Activated B cell treated with CpG ODN at 0.5 μM for 24 hours (primary cell): ENCODE measurements at regions of chr10 and their contacts with region 1.

Region 1: DNA sequence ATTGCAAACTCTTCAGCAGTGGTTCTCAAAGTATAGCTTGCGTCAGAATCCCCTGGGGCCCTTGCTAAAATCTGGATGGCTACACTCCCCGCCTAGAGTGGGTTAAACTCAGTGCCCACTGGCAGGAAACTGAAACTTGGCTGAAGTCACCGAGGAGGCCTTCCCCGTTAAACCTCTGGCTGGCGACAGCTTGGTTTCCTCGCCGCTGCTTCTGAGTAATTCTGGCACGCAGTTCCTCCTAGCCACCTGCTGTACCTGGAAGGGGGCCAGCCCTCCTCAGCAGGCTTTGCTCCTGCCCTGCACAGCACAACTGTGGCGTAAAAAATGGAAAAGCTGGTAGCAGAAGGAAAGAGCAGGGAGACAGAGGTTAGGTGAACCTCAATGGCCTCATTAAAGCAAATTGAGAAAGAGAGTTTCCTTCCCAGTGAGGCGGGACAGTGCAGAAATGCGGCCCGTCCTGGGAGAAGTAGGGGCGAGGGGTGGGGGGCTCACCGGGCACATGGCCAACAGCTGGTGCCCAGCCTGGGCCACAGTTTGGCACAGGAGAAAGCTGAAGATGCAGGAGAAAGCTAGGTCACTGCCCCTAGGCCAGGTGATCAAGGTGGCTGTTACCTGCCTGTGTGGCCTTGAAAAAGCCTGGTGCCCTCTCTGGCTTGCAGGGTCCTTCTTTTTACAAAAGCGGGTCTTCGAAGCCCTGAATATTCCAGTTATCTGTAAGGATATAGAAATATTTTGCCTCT is 46.6 kb downstream of the ALOX5 start:
- DNase-seq: peak; percentile 50
- ATAC-seq: peak; percentile 56
- H3K4me3 Mint-ChIP-seq: peak overlapping the region; percentile 95
- H3K27ac Mint-ChIP-seq: peak overlapping the region; percentile 97
- H3K4me1 Mint-ChIP-seq: peaks cover 65% of the 10 kb centered on the region
- H3K27me3 Mint-ChIP-seq: no peaks in the 10 kb centered on the region
- CTCF ChIP-seq: no peak

Region 2: DNA sequence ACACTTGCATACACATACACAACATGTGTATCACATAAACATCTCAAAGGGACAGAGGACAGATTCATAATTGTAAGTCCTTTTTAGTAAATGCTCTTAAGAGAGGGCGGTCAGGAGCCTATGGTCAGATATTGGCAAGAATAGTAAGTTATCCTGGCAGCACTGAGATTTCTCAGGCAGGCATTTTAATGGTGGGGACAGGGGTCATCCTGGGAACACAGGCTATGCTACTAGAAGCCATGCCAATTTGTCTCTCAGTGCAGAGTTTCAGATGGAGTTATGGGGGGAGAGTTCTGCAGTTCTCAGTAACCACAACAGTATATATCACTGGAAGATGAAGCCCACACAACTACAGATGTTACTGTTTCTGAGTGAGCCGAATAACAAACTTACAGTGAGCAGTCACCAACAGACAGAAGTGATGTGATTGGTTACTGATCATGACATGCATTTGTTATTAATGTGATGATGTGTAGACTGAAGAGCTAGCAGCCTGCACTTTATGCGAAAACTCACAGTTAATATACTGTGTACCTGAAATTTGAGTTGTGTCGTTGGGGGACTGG is 1967.3 kb before region 1 on chr10:
- CTCF ChIA-PET with region 1: no interaction called
- POLR2A ChIA-PET with region 1: interaction called, 14 read pairs
- intact Hi-C with region 1: no loop called
- DNase-seq: no peak
- ATAC-seq: no peak
- H3K4me3 Mint-ChIP-seq: peak overlapping the region; percentile 69
- H3K27ac Mint-ChIP-seq: peak overlapping the region; percentile 98
- H3K4me1 Mint-ChIP-seq: peaks cover 44% of the 10 kb centered on the region
- H3K27me3 Mint-ChIP-seq: no peaks in the 10 kb centered on the region
- CTCF ChIP-seq: no peak

Region 3: DNA sequence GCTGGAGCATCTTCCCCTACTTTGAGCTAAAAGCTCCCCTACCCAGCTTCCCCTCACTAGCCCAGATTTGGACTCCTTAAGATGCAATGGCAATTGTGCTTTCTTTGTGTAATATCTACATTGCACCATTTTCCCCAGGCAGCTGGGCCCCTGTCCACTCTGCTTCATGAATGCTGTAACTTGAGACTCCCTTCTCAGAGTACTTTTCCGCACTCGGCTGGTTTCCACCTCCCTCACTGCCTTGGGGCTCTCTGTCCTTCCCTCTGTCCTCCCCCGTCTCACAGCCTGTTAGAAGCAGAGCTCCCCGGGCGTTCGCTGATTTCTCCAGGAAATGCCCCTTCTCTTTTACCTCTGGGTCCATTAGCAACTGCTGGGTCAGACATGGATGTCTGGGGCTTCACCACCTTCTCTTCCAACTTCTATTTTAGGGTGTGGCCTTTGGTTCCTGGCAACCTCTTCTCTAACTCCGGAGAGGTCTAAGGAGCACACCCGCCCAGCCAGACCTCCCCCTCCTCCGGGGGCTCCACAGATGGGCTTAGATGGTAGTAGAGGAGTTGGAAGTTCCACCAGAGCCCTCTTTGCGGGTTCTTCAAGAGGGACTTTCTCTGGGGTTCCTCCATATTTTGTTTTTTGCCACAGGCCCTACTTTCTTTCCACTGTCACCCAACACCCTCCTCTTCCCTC is 512.4 kb before region 1 on chr10:
- CTCF ChIA-PET with region 1: no interaction called
- POLR2A ChIA-PET with region 1: no interaction called
- intact Hi-C with region 1: no loop called
- DNase-seq: no peak
- ATAC-seq: no peak
- H3K4me3 Mint-ChIP-seq: no peak overlapping the region
- H3K27ac Mint-ChIP-seq: no peak overlapping the region
- H3K4me1 Mint-ChIP-seq: peaks cover 2% of the 10 kb centered on the region
- H3K27me3 Mint-ChIP-seq: peaks cover 5% of the 10 kb centered on the region
- CTCF ChIP-seq: no peak

Region 4: DNA sequence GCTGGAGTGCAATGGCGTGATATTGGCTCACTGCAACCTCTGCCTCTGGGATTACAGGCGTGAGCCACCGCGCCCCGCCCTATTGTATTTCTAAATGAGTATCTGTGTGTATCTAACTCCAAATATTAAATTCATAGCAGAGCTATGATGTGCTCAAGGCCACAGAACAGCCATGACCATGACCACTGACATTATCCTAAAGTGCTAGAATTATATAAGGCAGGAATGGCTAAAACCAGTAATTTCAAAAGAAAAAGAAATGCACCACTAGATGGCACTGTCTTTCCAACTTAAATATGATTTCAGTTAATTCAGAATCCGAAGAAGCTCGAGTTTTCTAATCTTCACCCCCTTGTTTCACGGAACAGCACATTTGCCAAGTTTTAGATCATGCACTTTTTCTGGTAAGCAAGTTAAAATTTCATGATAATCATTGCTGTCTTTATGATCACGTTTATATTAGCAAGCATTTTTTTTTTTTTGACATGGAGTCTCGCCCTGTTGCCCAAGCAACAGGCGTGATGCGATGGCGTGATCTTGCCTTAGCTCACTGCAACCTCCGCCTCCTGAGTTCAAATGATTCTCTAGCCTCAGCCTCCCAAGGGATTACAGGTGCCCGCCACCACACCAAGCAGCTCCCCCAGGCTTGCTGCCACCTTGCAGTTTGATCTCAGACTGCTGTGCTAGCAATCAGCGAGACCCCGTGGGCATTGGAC is 170.5 kb before region 1 on chr10:
- CTCF ChIA-PET with region 1: interaction called, 3 read pairs
- POLR2A ChIA-PET with region 1: interaction called, 4 read pairs
- intact Hi-C with region 1: loop called (anchors 1 kb)
- DNase-seq: peak; percentile 42
- ATAC-seq: peak; percentile 84
- H3K4me3 Mint-ChIP-seq: peak overlapping the region; percentile 85
- H3K27ac Mint-ChIP-seq: peak overlapping the region; percentile 91
- H3K4me1 Mint-ChIP-seq: peaks cover 26% of the 10 kb centered on the region
- H3K27me3 Mint-ChIP-seq: peaks cover 2% of the 10 kb centered on the region
- CTCF ChIP-seq: peak; percentile 81

Region 5: DNA sequence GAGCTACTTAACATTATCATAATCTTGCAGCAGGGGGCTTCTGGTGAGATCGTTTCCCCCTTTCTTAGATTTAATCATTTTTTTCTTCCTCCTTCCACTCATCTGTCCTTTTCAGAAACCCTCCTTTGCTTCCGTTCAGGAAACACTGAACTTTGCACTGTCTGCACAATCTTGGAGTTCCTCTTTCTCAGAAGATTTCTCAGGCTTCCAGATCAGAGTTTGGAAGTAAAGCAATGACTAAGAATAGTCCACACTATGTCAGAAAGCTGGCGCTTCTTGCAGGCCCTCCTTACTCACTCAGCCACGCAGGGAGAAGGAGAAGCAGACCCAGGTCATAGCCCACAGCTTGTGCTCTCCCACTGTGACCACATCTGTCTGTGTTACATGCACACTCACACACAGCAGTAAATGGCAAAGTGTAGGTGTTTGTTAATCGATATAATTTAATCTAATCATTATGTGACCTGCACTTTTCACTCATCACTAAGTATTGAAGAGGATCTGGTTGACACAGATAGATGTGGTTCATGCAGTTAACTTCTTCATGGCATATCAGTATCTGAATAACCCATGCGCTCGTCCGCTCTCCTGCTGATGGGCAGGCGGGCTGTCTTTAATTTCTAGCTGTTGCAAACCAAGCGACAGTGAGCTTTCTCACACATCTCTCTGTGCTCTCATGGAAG is 16.4 kb before region 1 on chr10:
- CTCF ChIA-PET with region 1: interaction called, 4 read pairs
- POLR2A ChIA-PET with region 1: interaction called, 3 read pairs
- intact Hi-C with region 1: loop called (anchors 2 kb)
- DNase-seq: no peak
- ATAC-seq: peak; percentile 84
- H3K4me3 Mint-ChIP-seq: no peak overlapping the region
- H3K27ac Mint-ChIP-seq: peak overlapping the region; percentile 72
- H3K4me1 Mint-ChIP-seq: peaks cover 58% of the 10 kb centered on the region
- H3K27me3 Mint-ChIP-seq: no peaks in the 10 kb centered on the region
- CTCF ChIP-seq: no peak

Region 6: GRCh38 chr10:45437587-45438465 is 17.2 kb after region 1 on chr10:
- CTCF ChIA-PET with region 1: no interaction called
- POLR2A ChIA-PET with region 1: interaction called, 4 read pairs
- intact Hi-C with region 1: loop called (anchors 2 kb)
- DNase-seq: no peak
- ATAC-seq: no peak
- H3K4me3 Mint-ChIP-seq: no peak overlapping the region
- H3K27ac Mint-ChIP-seq: peak overlapping the region; percentile 73
- H3K4me1 Mint-ChIP-seq: peaks cover 27% of the 10 kb centered on the region
- H3K27me3 Mint-ChIP-seq: no peaks in the 10 kb centered on the region
- CTCF ChIP-seq: no peak